ENCODE measurements at regions of chr2 and their contacts with region 1.

Region 1: GRCh38 chr2:20438334-20439192 is 8.3 kb upstream of the RHOB start:
- DNase-seq: no peak
- CTCF ChIP-seq: no peak

Region 2: DNA sequence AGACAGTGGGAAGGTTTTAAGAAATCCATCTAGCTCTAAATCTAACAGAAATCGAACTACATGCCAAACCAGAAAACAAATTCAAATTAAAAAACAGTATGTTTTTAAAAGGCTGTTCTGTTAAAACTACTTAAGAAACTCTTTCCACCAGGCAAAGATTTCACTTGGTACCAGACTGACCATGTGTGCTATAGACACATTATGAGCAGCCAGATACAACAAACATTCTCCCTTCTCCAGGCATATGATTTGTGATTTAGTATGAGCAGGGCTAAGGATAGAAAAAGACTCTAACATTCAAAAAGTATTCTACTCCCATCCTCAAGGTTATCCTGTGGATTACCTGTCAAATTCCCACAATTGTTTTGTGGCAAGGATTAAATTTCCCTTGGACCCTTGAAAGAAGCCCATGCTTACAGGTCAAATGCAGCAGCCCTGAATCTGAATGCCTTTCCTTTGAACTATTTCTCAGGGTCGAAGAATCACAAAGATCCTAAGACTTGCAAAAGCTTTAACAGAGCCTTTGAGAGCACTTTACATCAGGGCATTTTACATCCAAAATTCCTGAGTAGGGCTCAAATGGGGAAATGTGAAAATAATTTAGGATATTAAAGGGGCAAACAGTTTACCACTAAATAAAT is 494.2 kb before region 1 on chr2:
- CTCF ChIA-PET with region 1: no interaction called
- POLR2A ChIA-PET with region 1: no interaction called
- DNase-seq: no peak
- CTCF ChIP-seq: no peak

Region 3: GRCh38 chr2:20097879-20098714 is 340.5 kb before region 1 on chr2:
- CTCF ChIA-PET with region 1: no interaction called
- POLR2A ChIA-PET with region 1: no interaction called
- DNase-seq: peak; percentile 86
- CTCF ChIP-seq: peak; percentile 80

Region 4: GRCh38 chr2:20635675-20636584 is 197.4 kb after region 1 on chr2:
- CTCF ChIA-PET with region 1: interaction called, 101 read pairs
- POLR2A ChIA-PET with region 1: interaction called, 8 read pairs
- DNase-seq: peak; percentile 83
- CTCF ChIP-seq: peak; percentile 95

Measured in GM10248 (cell line).